Head of caudate nucleus (tissue), 42 donors: ENCODE measurements at regions of chr3 and their contacts with region 1.

Region 1: GRCh38 chr3:98817547-98818041 is 54.5 kb downstream of the ST3GAL6 start:
- DNase-seq: no peak

Region 2: GRCh38 chr3:98602078-98602678 is 215.4 kb before region 1 on chr3:
- intact Hi-C with region 1: loop called (anchors 2 kb)
- DNase-seq: peak in 29 of 42 donors; percentile 20 to 83 (median 56)

Region 3: DNA sequence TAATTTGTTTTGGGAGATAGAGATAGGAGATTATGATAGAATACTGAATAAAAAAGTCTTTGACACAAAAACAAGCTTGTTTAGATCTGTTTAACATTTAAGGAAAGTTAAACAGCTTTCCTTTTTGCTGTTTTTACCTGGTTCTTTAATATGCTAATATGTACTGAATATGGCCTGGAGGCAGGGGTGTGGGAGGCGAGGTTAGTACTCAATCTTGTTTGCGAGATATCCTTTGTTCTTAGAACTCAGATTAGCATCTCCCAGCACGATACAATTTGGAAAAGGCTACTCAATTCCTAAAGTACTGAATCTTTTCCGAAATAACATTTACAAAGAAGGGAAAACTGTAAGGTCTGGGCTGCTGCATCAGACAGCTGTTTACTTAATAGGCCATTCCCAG is 95.2 kb before region 1 on chr3:
- intact Hi-C with region 1: no loop called
- DNase-seq: no peak

Region 4: DNA sequence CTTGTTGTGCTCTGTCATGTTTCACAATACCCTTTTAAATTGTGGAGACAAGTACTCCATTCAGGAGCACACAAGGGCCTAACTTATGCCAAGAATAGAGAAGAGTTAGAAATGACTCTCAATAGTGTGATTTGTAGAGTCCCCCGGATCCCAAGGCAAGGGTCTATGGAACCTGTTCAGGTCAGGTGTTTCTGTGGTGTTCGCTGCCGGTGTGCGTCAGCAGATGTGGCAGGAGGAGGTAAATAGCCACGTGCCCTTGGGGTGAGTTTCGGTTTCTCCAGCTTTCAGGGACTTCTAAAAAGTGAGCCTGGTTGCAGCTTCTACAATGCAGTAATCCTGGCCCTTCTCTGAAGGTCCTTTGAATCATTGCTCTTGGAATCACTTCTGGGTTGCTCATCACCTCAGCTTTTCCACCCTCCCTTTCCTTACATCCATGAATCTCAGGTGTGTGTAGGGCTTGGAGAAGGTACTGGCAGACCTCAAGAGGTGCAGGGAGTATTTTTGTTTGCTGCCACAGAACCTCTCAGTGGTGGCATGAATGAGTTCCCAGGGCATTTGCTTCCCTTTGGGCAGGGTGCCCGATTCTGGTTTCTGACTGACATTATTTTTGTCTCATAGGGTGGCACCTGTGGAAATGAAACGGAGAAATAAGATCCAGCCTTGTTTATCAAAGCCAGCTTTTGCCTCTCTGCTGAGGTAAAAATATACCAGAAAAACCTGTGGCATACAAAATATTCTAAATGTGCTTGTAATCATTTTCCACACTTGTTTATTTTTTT is 47.1 kb before region 1 on chr3:
- intact Hi-C with region 1: no loop called
- DNase-seq: peak in 30 of 42 donors; percentile 2 to 82 (median 41)

Region 5: GRCh38 chr3:98901392-98902350 is 84.1 kb after region 1 on chr3 and contains the start of gene DCBLD2:
- intact Hi-C with region 1: loop called (anchors 10 kb)
- DNase-seq: peak; percentile 96 to 100 (median 99)

Region 6: DNA sequence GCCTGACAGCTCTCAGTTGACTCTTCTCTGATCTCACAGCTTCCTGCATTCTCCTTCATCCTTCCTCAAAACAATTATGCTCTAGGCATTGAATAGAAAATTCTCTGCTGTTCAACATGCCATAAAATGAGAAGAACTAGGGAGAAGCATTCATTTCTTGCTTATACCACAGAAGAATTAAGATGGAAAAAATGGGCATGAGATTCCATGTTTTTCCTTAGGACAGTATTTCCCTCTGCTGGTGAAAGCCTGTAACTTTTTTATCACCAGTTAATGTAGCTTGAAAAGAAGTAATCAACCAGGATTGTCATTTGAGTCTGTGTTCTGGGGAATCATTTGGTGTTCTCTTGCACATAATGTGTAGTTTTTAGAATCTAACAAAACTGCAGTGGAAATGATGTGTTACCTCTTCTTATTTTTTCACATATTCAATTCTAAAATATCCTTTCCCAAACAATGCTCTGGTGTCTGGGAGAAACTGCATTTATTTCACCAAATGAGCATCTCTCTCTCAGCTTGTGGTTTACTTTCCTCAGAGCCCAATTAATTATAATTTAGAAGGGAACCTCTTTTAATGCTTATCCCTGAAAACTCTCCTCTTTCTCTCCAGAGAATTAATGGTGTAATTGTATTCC is 176.7 kb after region 1 on chr3:
- intact Hi-C with region 1: loop called (anchors 2 kb)
- DNase-seq: peak in 2 of 42 donors; percentile 3 to 52